ENCODE measurements at regions of chr1 and their contacts with region 1.

Region 1: GRCh38 chr1:233656032-233656620 is 42.2 kb downstream of the KCNK1 start:
- DNase-seq: peak; percentile 17
- H3K4me3 Mint-ChIP-seq: no peak overlapping the region
- H3K27ac Mint-ChIP-seq: peak overlapping the region; percentile 4
- H3K4me1 Mint-ChIP-seq: peaks cover 54% of the 10 kb centered on the region
- H3K27me3 Mint-ChIP-seq: no peaks in the 10 kb centered on the region
- CTCF ChIP-seq: no peak

Region 2: GRCh38 chr1:233668725-233669294 is 12.7 kb after region 1 on chr1:
- CTCF ChIA-PET with region 1: interaction called, 14 read pairs
- POLR2A ChIA-PET with region 1: interaction called, 28 read pairs
- intact Hi-C with region 1: no loop called
- DNase-seq: peak; percentile 96
- H3K4me3 Mint-ChIP-seq: no peak overlapping the region
- H3K27ac Mint-ChIP-seq: peak overlapping the region; percentile 92
- H3K4me1 Mint-ChIP-seq: peaks cover 29% of the 10 kb centered on the region
- H3K27me3 Mint-ChIP-seq: no peaks in the 10 kb centered on the region
- CTCF ChIP-seq: no peak